ENCODE measurements at regions of chr18 and their contacts with region 1.

Region 1: DNA sequence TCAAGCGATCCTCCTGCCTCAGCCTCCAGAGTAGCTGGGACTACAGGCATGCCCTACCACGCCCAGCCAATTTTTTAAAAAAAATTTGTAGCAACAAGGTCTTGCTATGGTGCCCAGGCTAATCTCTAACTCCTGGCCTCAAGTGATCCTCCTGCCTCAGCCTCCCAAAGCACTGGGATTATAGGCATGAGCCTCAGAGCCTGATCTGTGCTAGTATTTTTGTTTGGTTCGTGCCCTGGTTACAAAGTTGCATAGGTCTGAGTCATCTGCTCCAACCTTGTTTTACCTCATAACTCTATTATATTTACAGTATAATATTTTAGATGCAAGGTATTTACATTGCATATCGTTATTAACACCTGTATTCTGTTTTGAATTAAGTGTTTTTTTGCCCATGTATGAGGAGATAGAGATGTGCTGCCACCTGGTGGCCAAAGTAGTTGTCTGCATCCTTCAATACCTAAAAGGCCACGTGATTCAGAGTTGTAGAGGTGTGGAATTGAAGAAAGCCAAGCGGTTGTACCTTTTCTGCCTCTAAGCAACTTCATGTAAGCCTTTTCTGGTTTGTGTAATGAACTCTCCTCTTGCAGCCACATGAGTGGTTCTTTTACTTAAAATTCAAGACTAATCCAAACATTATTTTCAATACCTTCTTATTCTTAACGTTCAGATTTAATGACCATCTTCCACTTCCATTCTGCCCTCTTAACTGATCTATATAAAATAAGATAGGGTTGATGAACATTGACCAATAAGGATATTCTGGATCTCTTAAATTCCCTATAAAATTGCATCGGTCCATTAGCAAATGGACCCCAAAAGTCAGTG is 19.9 kb upstream of the CABYR start:
- DNase-seq: peak; percentile 60 to 89 (median 70)
- ATAC-seq: peak; percentile 46 to 74
- H3K4me3 ChIP-seq: no peak overlapping the region
- H3K27ac ChIP-seq: no peak overlapping the region
- H3K4me1 ChIP-seq: no peaks in the 10 kb centered on the region
- H3K27me3 ChIP-seq: no peaks in the 10 kb centered on the region

Region 2: DNA sequence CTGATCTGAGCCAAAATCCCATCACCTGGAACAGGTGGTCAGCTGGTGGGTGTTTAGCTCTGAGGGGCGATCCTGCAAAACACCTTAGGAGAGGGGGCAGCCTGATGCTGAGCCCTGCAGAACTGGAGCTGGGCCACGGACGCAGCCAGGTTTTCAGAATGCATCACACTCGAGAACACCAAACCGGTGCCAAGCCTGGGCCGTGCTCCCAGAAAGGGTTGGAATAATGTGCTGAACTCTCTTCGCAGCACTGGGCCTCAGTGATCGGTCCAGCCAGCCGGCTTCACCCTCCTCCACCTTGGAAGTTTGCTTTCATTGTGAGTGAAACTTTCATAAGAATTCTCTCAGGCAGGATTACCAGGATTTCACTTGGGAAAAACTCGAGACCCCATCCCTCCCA is 160.9 kb before region 1 on chr18:
- intact Hi-C with region 1: loop called in 1 of 4 experiments (anchors 5 kb)
- DNase-seq: peak; percentile 85 to 96 (median 92)
- ATAC-seq: peak; percentile 93 to 94
- H3K4me3 ChIP-seq: no peak overlapping the region
- H3K27ac ChIP-seq: no peak overlapping the region
- H3K4me1 ChIP-seq: no peaks in the 10 kb centered on the region
- H3K27me3 ChIP-seq: no peaks in the 10 kb centered on the region

Region 3: DNA sequence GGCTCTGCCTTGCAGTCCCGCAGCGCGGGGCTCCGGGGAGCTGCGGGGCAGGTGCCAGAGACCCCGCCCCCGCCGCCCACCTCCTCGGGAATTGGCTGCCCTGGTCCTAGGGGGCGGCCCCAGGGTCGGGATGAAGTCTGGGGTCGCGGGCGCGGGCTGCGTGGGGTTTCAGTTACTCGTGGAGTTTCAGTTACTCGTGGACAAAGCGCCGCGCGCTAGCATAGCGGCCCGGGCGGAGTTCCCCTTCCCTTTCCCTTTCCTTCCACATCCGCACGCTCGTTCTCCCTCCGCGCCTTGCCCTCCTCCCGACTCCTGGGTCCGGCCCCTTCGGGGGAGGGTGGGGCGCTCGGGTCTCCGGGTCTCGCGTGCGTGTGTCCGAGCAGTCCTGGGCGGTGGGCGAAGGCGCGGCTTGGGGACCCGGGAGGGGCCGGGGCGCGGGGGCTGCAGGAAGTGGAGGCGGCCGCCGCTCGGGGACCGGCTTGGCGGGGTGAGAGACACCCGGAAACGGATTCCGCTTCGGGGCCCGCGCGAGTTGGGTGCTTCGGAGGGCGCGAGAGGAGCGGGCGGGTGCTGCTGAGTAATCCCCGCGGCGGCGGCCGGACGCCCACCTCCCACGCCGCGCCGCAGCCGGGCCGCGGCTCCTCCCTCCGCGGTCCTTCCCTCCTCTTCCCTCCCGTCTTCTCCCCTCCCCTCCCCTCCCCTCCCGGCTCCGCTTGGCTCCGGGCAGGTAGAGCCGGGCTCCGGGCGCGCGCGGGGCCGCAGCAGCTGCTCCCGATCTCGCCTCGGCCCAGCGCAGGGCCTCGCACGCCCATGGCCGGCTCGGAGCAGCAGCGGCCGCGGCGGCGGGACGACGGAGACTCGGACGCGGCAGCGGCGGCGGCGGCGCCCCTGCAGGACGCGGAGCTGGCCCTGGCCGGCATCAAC is 104.6 kb before region 1 on chr18 and contains the start of gene TTC39C:
- intact Hi-C with region 1: loop called in 2 of 4 experiments (anchors 10 kb)
- DNase-seq: peak; percentile 80 to 90 (median 89)
- ATAC-seq: peak; percentile 84 to 91
- H3K4me3 ChIP-seq: peak within 1 kb of the TSS; percentile 97
- H3K27ac ChIP-seq: peak within 1 kb of the TSS; percentile 53
- H3K4me1 ChIP-seq: no peaks in the 10 kb centered on the region
- H3K27me3 ChIP-seq: no peaks in the 10 kb centered on the region
- total RNA-seq, gene TTC39C: 4.1 to 11.0 (median 6.0) TPM

Region 4: DNA sequence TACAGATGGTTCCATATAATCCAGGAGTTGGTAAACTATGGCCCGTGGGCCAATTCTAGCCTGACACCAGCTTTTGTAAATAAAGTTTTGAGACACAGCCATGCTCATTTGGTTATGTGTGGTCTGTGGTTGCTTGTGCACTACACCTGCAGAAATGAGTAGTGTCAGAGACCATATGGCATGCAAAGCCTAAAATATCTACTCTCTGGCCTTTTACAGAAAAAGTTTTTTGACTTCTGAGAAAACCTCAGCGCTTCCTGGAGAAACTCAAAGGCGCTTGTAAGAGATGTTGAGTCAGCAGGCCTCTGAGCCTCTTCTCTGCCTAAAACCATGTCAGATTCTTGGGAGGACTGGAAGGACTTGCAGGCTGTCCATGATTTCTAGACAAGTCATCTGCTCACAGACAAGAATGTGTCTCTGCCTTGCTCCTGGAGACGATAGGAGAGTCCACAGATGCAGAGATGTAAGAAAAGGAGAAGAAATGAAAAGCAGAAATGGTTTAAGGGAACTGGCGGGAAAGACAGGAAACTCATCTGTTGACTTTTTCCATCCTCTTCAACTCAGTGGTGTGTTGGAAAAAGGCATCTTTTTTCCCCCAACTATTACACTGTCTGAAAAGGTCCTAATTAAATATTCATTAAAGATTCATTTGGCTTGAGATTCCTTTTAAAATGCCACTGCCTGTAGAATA is 99.2 kb before region 1 on chr18:
- intact Hi-C with region 1: loop called in 3 of 4 experiments (anchors 10 kb)
- DNase-seq: no peak
- ATAC-seq: no peak
- H3K4me3 ChIP-seq: no peak overlapping the region
- H3K27ac ChIP-seq: no peak overlapping the region
- H3K4me1 ChIP-seq: no peaks in the 10 kb centered on the region
- H3K27me3 ChIP-seq: no peaks in the 10 kb centered on the region

Region 5: DNA sequence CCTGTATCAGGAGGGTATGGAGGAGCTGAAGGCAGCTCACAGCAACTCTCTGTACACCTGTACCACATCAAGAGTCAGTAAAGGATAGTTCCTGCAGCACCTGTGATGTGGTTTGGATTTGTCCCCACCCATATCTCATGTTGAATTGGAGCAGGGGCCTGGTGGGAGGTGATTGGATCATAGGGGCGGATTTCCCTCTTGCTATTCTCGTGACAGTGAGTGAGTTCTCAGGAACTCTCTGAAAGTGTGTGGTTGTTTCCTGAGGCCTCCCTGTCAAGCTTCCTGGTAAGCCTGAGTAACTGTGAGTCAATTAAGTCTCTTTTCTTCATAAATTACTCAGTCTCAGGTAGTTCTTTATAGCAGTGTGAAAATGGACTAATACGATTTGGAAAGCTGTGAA is 249.8 kb after region 1 on chr18:
- intact Hi-C with region 1: no loop called
- DNase-seq: no peak
- ATAC-seq: no peak
- H3K4me3 ChIP-seq: no peak overlapping the region
- H3K27ac ChIP-seq: no peak overlapping the region
- H3K4me1 ChIP-seq: no peaks in the 10 kb centered on the region
- H3K27me3 ChIP-seq: no peaks in the 10 kb centered on the region

Region 6: GRCh38 chr18:25136416-25137196 is 1017.6 kb after region 1 on chr18:
- intact Hi-C with region 1: no loop called
- DNase-seq: no peak
- ATAC-seq: peak; percentile 80 to 92
- H3K4me3 ChIP-seq: no peak overlapping the region
- H3K27ac ChIP-seq: peak overlapping the region; percentile 72
- H3K4me1 ChIP-seq: peaks cover 17% of the 10 kb centered on the region
- H3K27me3 ChIP-seq: no peaks in the 10 kb centered on the region

Measured in right cardiac atrium (tissue), 5 donors.